RWPE1 (cell line): ENCODE measurements at regions of chr5 and their contacts with region 1.

Region 1: GRCh38 chr5:140357726-140358093 is 2.3 kb upstream of the SLC4A9 start:
- DNase-seq: peak; percentile 95
- H3K27ac ChIP-seq: no peak overlapping the region
- CTCF ChIP-seq: peak; percentile 98

Region 2: DNA sequence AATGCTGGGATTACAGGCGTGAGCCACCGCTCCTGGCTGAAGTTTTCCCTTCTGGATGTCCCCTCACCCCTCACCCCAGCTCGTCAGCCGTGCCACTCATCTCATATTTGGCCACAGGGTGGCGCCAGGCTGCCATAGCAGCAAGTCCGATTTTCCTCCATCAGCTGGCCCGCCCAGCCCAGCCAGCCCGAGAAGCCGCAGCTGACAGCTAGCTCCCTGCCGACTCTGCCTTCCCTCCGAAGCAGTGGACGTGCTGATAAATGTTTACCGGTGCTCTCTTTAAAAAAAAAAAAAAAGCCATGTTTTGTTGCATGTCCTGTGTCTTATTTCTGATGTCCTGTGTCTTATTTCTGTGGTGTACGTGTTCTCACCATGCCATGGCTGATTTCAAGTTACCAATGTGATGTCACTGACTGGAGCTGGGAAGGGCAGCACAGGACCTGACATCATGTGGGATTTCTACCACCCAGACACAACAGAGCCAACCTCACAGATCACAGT is 113.1 kb before region 1 on chr5:
- CTCF ChIA-PET with region 1: interaction called, 55 read pairs
- POLR2A ChIA-PET with region 1: no interaction called
- DNase-seq: peak; percentile 83
- H3K27ac ChIP-seq: peak overlapping the region; percentile 53; the same call in 1 of the 2 replicates
- CTCF ChIP-seq: peak; percentile 93

Region 3: DNA sequence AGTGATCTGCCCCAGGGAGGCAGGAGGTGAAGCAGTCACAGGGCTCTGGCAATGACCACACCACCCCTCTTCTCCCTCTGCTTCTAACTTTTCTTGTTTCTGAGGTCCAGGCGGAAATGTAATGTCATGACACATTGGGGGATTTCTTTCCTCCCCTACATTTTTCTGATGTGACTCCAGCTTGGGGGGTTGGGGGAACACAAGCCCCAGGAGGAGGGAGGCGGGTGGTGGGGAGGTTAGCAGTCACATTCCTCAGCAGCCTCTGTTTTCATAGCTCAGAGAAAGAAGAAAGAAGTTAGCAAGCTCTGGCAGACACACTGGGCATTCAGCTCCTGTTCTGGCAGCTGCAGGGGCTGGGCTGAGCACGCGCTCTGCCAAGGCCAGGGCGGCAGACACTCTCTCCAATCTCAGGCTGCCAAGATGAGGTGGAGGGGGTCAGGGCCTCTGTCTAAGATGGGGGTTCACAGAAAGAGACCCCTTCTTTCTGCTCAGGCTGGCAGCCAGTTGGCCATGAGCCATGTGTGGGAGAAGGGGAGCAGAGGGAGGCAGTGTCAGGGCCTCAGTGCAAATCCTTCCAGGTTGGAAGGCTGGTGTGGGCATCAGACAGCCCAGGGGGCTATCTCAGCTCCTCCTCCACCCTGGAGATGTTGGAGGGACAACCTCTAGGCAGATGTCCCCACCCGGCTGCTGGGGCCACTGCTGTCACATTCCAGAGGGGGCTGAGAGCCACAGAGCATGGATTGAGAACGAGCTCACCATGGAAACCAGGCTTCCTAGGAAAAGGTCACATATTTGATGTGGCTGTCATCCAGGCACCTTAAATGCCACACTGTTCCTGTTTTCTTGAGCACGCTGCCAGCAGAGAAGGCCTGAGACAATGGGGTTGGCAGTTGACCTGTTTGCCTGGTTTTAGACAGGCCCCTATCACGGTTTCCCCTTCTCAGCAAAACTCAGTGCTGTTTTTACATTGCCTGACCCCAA is 34.7 kb before region 1 on chr5:
- CTCF ChIA-PET with region 1: no interaction called
- POLR2A ChIA-PET with region 1: no interaction called
- DNase-seq: peak; percentile 63
- H3K27ac ChIP-seq: peak overlapping the region; percentile 64
- CTCF ChIP-seq: no peak

Region 4: DNA sequence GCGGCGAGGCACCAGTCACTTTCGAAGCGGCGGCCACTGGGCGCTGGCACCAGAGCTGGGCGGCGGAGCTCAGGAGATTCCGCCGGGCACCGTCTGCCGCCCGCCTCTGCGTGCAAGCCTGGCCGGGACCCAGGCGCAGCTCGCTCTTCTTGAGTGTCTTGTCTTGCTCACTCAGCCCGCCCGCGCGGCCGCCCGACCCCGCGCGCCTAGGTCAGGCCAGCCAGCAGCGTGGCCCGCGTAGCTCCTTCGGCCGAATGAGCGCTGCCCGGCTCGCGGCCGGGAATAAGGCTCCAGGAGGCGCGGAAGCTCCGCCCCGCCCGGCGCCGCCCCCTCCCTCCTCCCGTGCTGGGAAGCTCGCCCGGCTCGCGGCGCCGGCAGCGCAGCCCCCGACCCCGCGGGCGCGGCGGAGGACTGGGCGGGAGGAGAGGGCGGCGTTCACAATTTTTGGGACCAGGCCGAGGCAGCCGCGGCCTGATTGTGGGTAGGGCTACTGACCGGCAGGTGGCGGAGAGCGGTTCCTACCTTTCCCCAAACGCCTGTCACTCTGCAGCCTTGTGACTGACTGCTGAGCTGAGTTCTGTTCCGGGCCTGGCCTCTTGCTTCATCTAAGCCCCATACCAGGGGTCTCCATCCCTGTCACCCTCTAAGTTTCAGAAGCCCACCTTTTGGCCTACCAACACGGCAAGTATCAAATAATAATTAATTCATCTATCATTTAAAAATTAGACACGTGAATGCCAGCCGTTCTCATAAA is 11.2 kb before region 1 on chr5 and contains the start of gene HBEGF:
- CTCF ChIA-PET with region 1: interaction called, 15 read pairs
- POLR2A ChIA-PET with region 1: interaction called, 4 read pairs
- DNase-seq: peak; percentile 94
- H3K27ac ChIP-seq: peak within 1 kb of the TSS; percentile 55
- CTCF ChIP-seq: peak; percentile 65

Region 5: GRCh38 chr5:140372971-140373487 is 15.3 kb after region 1 on chr5:
- CTCF ChIA-PET with region 1: interaction called, 15 read pairs
- POLR2A ChIA-PET with region 1: no interaction called
- DNase-seq: peak; percentile 84
- H3K27ac ChIP-seq: no peak overlapping the region
- CTCF ChIP-seq: peak; percentile 96

Region 6: DNA sequence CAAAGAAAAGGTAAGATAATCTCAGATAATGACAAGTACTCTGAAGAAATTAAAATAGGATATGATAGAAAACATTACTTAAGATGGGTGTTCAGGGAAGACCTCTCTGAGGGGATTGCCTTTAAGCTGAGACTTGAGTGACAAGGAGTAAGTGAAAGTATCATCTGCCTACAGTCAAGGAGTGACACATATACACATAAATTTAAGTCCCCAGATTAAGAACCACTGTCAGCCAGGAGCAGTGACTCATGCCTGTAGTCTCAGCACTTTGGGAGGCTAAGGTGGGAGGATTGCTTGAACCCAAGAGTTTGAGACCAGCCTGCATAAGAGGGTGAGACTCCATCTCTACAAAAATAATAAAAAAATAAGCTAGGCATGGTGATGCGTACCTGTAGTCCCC is 24.3 kb after region 1 on chr5:
- CTCF ChIA-PET with region 1: interaction called, 13 read pairs
- POLR2A ChIA-PET with region 1: no interaction called
- DNase-seq: no peak
- H3K27ac ChIP-seq: no peak overlapping the region
- CTCF ChIP-seq: no peak